K562 (cell line): ENCODE measurements at regions of chr14 and their contacts with region 1.

Region 1: GRCh38 chr14:74612350-74613021 is 449 bp upstream of the LTBP2 start:
- DNase-seq: peak; percentile 81 to 89 (median 84)
- ATAC-seq: peak; percentile 96
- H3K4me3 ChIP-seq: peak overlapping the region; percentile 55
- H3K27ac ChIP-seq: no peak overlapping the region
- H3K4me1 ChIP-seq: peaks cover 13 to 23% of the 10 kb centered on the region in 2 experiments
- H3K27me3 ChIP-seq: peaks cover 2 to 7% of the 10 kb centered on the region in 2 experiments; a peak in 2 of 5 replicates
- CTCF ChIP-seq: peak; percentile 46 to 97 (median 84); a peak in 4 of 6 replicates
- EP300 ChIP-seq: no peak
- POLR2A ChIP-seq: no peak
- RAD21 ChIP-seq: peak in 1 of 2 experiments; percentile 65; a peak in 3 of 4 replicates

Region 2: GRCh38 chr14:74571901-74572725 is 40.4 kb before region 1 on chr14:
- CTCF ChIA-PET with region 1: no interaction called
- POLR2A ChIA-PET with region 1: no interaction called
- in situ Hi-C with region 1: no loop called
- intact Hi-C with region 1: no loop called
- DNase-seq: no peak
- ATAC-seq: no peak
- H3K4me3 ChIP-seq: no peak overlapping the region
- H3K27ac ChIP-seq: no peak overlapping the region
- H3K4me1 ChIP-seq: no peaks in the 10 kb centered on the region; a peak in 1 of 5 replicates
- H3K27me3 ChIP-seq: peaks cover 6 to 55% of the 10 kb centered on the region in 2 experiments; a peak in 3 of 5 replicates
- CTCF ChIP-seq: no peak
- EP300 ChIP-seq: no peak
- POLR2A ChIP-seq: no peak
- RAD21 ChIP-seq: no peak

Region 3: GRCh38 chr14:74797495-74797894 is 185.0 kb after region 1 on chr14:
- CTCF ChIA-PET with region 1: interaction called, 7 read pairs
- POLR2A ChIA-PET with region 1: no interaction called
- in situ Hi-C with region 1: loop called (anchors 5 kb)
- intact Hi-C with region 1: no loop called
- DNase-seq: no peak
- ATAC-seq: no peak
- H3K4me3 ChIP-seq: no peak overlapping the region
- H3K27ac ChIP-seq: no peak overlapping the region
- H3K4me1 ChIP-seq: peaks cover 0 to 6% of the 10 kb centered on the region in 2 experiments; a peak in 2 of 5 replicates
- H3K27me3 ChIP-seq: no peaks in the 10 kb centered on the region
- CTCF ChIP-seq: no peak
- EP300 ChIP-seq: no peak
- POLR2A ChIP-seq: no peak
- RAD21 ChIP-seq: no peak

Region 4: GRCh38 chr14:74804219-74804826 is 191.8 kb after region 1 on chr14:
- CTCF ChIA-PET with region 1: interaction called, 21 read pairs
- POLR2A ChIA-PET with region 1: interaction called, 5 read pairs
- in situ Hi-C with region 1: loop called (anchors 5 kb)
- intact Hi-C with region 1: loop called (anchors 1 kb)
- DNase-seq: peak in 3 of 4 experiments; percentile 17 to 45 (median 19)
- ATAC-seq: peak; percentile 73
- H3K4me3 ChIP-seq: no peak overlapping the region
- H3K27ac ChIP-seq: no peak overlapping the region
- H3K4me1 ChIP-seq: peaks cover 0 to 2% of the 10 kb centered on the region in 2 experiments; a peak in 1 of 5 replicates
- H3K27me3 ChIP-seq: no peaks in the 10 kb centered on the region
- CTCF ChIP-seq: peak; percentile 52 to 66 (median 58)
- EP300 ChIP-seq: no peak
- POLR2A ChIP-seq: no peak
- RAD21 ChIP-seq: peak; percentile 49 to 74

Region 5: DNA sequence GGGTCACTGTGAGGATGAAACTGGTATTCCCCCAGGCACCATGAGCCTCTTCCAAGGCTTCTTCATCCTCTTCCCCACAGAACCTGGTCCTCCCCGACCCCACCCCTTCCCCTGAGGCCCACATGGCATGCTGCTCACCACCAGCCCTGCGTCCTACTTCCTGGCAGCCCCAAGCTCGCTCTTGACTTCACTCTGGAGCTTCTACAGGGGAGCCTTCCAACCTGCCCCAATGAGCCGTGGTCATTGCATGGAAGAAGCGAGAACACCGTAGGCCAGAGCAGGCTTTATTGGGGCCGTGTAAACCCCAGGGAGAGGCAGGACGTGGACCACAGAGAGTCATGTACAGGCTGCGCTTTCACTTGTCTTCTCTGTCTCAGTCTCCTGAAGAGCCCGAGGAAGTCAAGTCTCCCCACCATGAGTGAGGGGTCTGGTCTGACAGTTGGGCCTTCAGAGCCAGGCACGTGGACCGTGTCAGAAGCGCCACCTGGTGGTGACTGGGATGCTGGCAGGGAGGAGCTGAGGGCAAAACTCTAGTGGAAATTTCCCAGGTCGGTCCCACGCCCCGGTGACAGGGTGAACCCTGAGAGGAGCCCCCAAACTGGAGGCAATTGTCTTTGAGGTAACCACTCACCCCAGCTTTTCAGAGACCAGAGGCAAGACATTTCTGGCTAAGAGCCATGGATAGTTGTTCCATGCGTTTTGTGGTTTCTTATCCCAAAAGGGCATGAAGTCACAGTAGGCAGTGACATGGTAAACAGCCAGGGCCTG is 293.1 kb after region 1 on chr14:
- CTCF ChIA-PET with region 1: no interaction called
- POLR2A ChIA-PET with region 1: no interaction called
- in situ Hi-C with region 1: no loop called
- intact Hi-C with region 1: loop called (anchors 5 kb)
- DNase-seq: peak; percentile 69 to 74 (median 70)
- ATAC-seq: peak; percentile 83
- H3K4me3 ChIP-seq: no peak overlapping the region
- H3K27ac ChIP-seq: no peak overlapping the region; the same call in 2 of the 3 replicates
- H3K4me1 ChIP-seq: peaks cover 10 to 30% of the 10 kb centered on the region in 2 experiments; a peak in 3 of 5 replicates
- H3K27me3 ChIP-seq: no peaks in the 10 kb centered on the region
- CTCF ChIP-seq: peak; percentile 81 to 94 (median 83)
- EP300 ChIP-seq: no peak
- POLR2A ChIP-seq: peak; percentile 49; the same call in 1 of the 2 replicates
- RAD21 ChIP-seq: peak; percentile 67 to 77